Mammary epithelial cell (primary cell): ENCODE measurements at regions of chrX and their contacts with region 1.

Region 1: DNA sequence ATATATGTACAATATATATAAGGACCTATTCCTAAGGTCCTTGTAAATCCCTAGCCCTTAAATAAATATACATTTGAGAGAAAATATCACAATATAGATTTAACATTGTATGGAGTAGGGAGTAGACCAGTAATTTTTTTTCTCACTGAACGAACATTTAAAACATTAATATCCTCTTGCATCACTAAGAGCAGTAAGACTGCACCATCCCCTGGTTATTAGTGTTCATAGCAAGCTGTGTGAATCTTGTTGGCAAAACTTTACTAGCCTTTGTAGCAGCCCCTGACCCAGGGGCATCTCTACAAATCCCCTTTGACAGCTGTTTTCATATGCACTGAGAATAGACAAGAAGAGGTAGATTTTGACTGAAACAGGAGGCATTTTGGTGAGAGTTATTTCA is 146.5 kb downstream of the IL1RAPL2 start:
- DNase-seq: no peak
- H3K4me3 ChIP-seq: no peak overlapping the region
- H3K27ac ChIP-seq: no peak overlapping the region
- H3K4me1 ChIP-seq: no peaks in the 10 kb centered on the region
- H3K27me3 ChIP-seq: peaks cover 4% of the 10 kb centered on the region
- CTCF ChIP-seq: peak; percentile 19 to 45

Region 2: GRCh38 chrX:104411800-104412199 is 300.7 kb before region 1 on chrX:
- CTCF ChIA-PET with region 1: no interaction called
- dilution Hi-C with region 1: no loop called
- in situ Hi-C with region 1: no loop called
- intact Hi-C with region 1: no loop called
- DNase-seq: no peak
- H3K4me3 ChIP-seq: no peak overlapping the region
- H3K27ac ChIP-seq: no peak overlapping the region
- H3K4me1 ChIP-seq: no peaks in the 10 kb centered on the region
- H3K27me3 ChIP-seq: no peaks in the 10 kb centered on the region
- CTCF ChIP-seq: no peak

Region 3: GRCh38 chrX:104659005-104659744 is 53.3 kb before region 1 on chrX:
- CTCF ChIA-PET with region 1: no interaction called
- dilution Hi-C with region 1: no loop called
- in situ Hi-C with region 1: no loop called
- intact Hi-C with region 1: no loop called
- DNase-seq: peak; percentile 32
- H3K4me3 ChIP-seq: peak overlapping the region in 1 of 3 experiments; percentile 13
- H3K27ac ChIP-seq: no peak overlapping the region
- H3K4me1 ChIP-seq: no peaks in the 10 kb centered on the region
- H3K27me3 ChIP-seq: peaks cover 3% of the 10 kb centered on the region
- CTCF ChIP-seq: no peak

Region 4: DNA sequence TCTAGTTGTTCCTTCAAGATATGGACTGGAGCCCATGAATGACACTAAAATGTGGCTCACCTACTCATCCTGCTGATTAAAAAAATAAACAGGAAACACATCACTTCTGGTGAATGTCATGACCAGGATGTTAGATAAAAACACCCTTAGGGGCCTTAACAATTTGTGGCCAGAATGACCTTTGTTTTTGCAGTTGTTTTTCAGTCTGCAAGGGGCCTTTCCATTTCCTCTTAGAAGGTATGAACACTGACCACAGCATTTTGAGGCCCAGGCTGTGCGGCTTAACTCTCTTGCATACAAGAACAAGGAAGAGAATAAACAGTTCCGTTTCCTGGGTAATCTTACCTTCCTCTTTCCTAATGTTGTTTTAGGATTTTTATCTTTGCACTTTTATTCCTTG is 33.3 kb before region 1 on chrX:
- CTCF ChIA-PET with region 1: interaction called, 12 read pairs
- dilution Hi-C with region 1: no loop called
- in situ Hi-C with region 1: no loop called
- intact Hi-C with region 1: no loop called
- DNase-seq: no peak
- H3K4me3 ChIP-seq: no peak overlapping the region
- H3K27ac ChIP-seq: no peak overlapping the region
- H3K4me1 ChIP-seq: no peaks in the 10 kb centered on the region
- H3K27me3 ChIP-seq: peaks cover 1% of the 10 kb centered on the region
- CTCF ChIP-seq: no peak